ENCODE measurements at regions of chr11 and their contacts with region 1.

Region 1: DNA sequence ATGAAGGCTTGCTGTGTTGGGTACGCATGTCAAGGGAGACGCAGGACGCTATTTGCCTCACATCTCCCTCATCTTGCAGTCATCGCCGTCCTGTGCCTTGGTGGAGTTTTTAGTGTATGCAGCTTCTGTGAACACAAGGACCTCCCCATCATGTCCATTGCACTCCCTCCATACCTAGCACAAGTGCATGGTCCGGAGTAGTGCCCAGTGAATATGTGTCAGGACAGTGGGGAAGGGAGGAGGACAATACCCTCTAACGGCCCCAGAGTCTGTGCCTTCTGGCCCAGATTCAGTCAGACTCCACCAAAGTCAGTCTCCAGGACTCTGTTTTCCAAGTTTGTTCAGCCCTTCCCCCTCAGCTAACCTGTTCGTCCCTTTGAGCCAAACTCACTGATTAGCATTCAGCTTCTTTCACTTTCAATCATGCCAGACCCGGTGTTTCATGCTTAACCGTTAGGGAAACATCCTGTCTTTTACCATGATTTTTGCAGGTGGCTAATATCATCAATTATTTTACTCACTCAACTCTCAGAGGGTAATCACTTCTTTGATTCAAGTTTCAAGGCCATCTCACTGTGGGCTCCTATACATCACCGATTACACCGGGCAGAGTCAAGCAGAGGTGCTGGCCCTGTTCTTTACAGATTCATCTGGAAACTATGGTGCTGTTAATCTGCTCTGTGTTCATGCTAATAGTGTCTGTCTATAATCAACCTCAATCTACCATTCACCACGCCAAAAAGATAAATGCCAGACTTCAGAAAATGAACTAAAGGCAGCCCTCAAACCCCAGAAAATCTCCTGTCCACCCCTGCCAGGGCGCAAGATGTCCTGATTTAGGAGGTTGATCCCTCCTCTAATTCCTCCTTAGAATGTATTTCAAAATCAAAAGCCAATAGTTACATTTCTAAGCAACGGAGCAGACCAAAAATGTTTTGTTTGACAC is 156.5 kb downstream of the RRAS2 start:
- DNase-seq: no peak
- H3K4me3 Mint-ChIP-seq: no peak overlapping the region
- H3K27ac Mint-ChIP-seq: no peak overlapping the region
- H3K4me1 Mint-ChIP-seq: peaks cover 8% of the 10 kb centered on the region
- H3K27me3 Mint-ChIP-seq: no peaks in the 10 kb centered on the region

Region 2: DNA sequence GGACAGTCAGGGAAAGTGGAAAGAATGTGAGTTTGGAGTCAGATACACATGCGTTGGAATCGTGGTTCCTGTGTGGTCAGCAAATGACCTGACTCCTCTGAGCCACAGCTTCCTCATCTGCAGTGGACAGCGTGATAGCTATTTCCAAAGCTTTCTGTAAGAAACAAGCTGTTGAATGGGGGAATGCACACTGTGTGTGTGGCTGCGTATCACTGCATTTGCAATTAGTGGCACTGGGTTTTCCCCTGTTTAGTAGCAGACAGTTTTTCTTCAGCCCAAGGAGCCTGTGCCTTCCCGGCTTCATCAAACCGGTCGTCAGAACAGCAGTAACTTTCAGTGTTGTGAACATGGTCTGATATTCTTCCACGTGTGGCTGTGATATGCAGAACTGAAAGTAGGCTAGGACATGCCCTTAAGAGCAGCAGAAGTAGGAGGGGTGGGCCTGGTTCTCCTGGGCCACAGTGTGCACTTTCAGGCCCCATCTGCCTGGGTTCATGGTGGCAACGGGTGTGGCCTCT is 35.0 kb after region 1 on chr11:
- CTCF ChIA-PET with region 1: no interaction called
- POLR2A ChIA-PET with region 1: no interaction called
- intact Hi-C with region 1: loop called (anchors 1 kb)
- DNase-seq: no peak
- H3K4me3 Mint-ChIP-seq: no peak overlapping the region
- H3K27ac Mint-ChIP-seq: no peak overlapping the region
- H3K4me1 Mint-ChIP-seq: peaks cover 4% of the 10 kb centered on the region
- H3K27me3 Mint-ChIP-seq: peaks cover 2% of the 10 kb centered on the region

Measured in activated CD4-positive, alpha-beta memory T cell treated with anti-CD3 and anti-CD28 coated beads for 36 hours (primary cell).